Activated naive CD4-positive, alpha-beta T cell treated with anti-CD3 and anti-CD28 coated beads for 36 hours (primary cell): ENCODE measurements at regions of chr1 and their contacts with region 1.

Region 1: GRCh38 chr1:193104906-193105820 is at the start of gene GLRX2:
- DNase-seq: peak; percentile 60
- H3K4me3 Mint-ChIP-seq: peak within 1 kb of the TSS; percentile 89
- H3K27ac Mint-ChIP-seq: peak within 1 kb of the TSS; percentile 68
- H3K4me1 Mint-ChIP-seq: peaks cover 19% of the 10 kb centered on the region
- H3K27me3 Mint-ChIP-seq: no peaks in the 10 kb centered on the region
- total RNA-seq, gene GLRX2: 16.5 to 18.5 TPM

Region 2: GRCh38 chr1:192766009-192766625 is 339.0 kb before region 1 on chr1:
- CTCF ChIA-PET with region 1: no interaction called
- intact Hi-C with region 1: no loop called
- DNase-seq: no peak
- H3K4me3 Mint-ChIP-seq: no peak overlapping the region
- H3K27ac Mint-ChIP-seq: no peak overlapping the region
- H3K4me1 Mint-ChIP-seq: no peaks in the 10 kb centered on the region
- H3K27me3 Mint-ChIP-seq: peaks cover 15% of the 10 kb centered on the region

Region 3: GRCh38 chr1:193121616-193122593 is 16.7 kb after region 1 on chr1 and contains the start of gene CDC73:
- CTCF ChIA-PET with region 1: interaction called, 5 read pairs
- intact Hi-C with region 1: loop called (anchors 1 kb)
- DNase-seq: peak; percentile 97
- H3K4me3 Mint-ChIP-seq: peak within 1 kb of the TSS; percentile 92
- H3K27ac Mint-ChIP-seq: peak within 1 kb of the TSS; percentile 92
- H3K4me1 Mint-ChIP-seq: peaks cover 43% of the 10 kb centered on the region
- H3K27me3 Mint-ChIP-seq: peaks cover 1% of the 10 kb centered on the region
- total RNA-seq, gene CDC73: 39.0 to 45.2 TPM